Activated CD4-positive, alpha-beta T cell treated with anti-CD3 and anti-CD28 coated beads, Interleukin-2, amount 10 ng/mL, durations not matched to agents 24 days and 14 days (primary cell): ENCODE measurements at regions of chr3 and their contacts with region 1.

Region 1: DNA sequence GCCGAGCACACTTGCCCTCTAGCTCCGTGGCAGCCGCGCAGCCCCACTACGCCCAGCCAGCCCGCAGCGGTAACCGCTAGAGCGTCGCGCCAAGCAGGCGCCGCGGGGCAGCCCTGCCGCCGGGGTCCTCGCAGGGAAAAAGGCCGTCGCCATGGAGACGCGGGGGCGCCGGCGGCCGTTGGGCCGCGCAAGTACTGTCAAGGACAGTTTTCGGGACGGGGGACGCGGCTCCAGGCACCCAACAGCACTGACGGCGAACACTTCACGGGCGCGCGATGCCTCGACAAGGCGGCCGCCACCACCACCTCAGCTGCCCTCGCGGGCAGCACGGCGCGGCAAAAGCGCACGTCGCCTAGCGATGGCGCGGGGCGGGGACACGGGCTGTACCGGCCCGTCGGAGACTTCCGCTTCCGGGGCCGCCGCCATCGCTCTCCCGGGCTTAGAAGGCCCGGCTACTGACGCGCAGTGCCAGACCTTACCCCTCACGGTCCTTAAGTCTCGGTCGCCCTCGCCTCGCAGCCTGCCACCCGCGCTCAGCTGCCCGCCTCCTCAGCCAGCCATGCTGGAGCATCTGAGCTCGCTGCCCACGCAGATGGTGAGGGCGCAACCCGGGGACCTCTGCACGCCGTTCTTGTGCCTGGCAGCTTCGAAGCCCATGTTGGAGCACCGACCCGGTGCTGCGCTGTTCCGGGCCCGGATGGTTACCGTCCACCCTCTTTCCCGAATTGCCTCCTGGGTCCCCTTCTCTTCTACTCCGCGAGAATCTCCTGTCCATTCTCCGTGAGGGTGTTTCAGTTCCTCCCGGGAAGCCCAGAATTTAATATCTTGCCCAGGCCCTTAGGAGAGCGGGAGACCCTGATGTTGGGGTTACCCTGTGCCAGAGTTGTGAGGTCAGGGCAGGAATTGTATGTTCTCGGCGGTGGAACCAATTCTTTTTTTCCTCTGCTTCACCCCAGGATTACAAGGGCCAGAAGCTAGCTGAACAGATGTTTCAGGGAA is at the starts of genes GLT8D1 and SPCS1:
- DNase-seq: peak; percentile 96
- H3K4me3 Mint-ChIP-seq: peak within 1 kb of the TSS; percentile 94
- H3K27ac Mint-ChIP-seq: peak within 1 kb of the TSS; percentile 95
- H3K4me1 Mint-ChIP-seq: peaks cover 22% of the 10 kb centered on the region
- H3K27me3 Mint-ChIP-seq: no peaks in the 10 kb centered on the region
- total RNA-seq, gene GLT8D1: 38.7 and 39.0 TPM in 2 replicates
- total RNA-seq, gene SPCS1: 134 and 135 TPM in 2 replicates

Region 2: GRCh38 chr3:51670823-51671733 is 1034.9 kb before region 1 on chr3 and contains the start of gene TEX264:
- intact Hi-C with region 1: no loop called
- DNase-seq: peak; percentile 99
- H3K4me3 Mint-ChIP-seq: peak within 1 kb of the TSS; percentile 93
- H3K27ac Mint-ChIP-seq: peak within 1 kb of the TSS; percentile 93
- H3K4me1 Mint-ChIP-seq: peaks cover 61% of the 10 kb centered on the region
- H3K27me3 Mint-ChIP-seq: no peaks in the 10 kb centered on the region
- total RNA-seq, gene TEX264: 45.6 and 47.0 TPM in 2 replicates

Region 3: DNA sequence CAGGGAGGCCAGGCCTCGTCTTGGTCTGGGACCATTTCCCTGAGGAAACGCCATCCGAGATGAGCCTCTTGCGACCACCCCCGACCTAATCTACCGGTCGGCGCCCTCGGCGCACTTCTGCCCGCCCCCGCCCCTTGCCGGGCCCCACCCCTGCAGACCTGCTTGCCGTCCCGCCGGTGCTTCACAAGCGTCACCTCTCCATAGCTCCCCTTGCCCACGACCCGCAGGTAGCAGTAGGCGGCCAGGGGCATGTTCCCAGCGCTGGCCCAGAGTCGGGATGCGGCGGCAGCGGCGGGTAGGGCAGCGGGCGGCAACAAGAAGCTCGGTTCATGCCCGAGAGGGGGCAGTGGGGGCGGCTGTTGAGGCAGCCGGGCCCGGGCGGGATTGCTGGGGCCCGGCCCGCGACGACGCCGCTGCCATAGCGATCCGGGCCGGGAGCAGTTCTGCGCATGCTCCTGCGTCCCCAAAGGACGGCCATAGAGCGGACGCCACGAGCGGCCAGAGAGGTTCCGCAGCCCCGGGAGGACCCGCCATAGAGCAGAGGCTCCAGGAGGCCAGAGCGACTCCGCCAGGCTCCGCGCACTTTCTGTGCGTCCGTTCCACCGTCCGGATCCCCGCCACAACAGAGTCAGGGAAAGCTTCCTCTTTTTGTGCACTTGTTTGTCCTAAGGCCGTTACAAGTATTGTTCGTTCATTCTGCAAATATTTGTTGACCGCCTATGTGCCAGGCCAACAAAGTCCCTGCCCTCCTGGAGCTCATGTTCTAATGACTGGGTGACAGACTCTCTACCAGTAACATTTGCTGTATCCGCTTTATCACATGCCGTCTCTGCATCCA is 64.7 kb after region 1 on chr3 and contains the start of gene NEK4:
- intact Hi-C with region 1: loop called (anchors 2 kb)
- DNase-seq: peak; percentile 95
- H3K4me3 Mint-ChIP-seq: peak within 1 kb of the TSS; percentile 88
- H3K27ac Mint-ChIP-seq: peak within 1 kb of the TSS; percentile 94
- H3K4me1 Mint-ChIP-seq: peaks cover 19% of the 10 kb centered on the region
- H3K27me3 Mint-ChIP-seq: no peaks in the 10 kb centered on the region
- total RNA-seq, gene NEK4: 29.4 and 30.3 TPM in 2 replicates

Region 4: GRCh38 chr3:52798978-52799476 is 93.0 kb after region 1 on chr3:
- intact Hi-C with region 1: no loop called
- DNase-seq: peak; percentile 75
- H3K4me3 Mint-ChIP-seq: no peak overlapping the region
- H3K27ac Mint-ChIP-seq: no peak overlapping the region
- H3K4me1 Mint-ChIP-seq: peaks cover 3% of the 10 kb centered on the region
- H3K27me3 Mint-ChIP-seq: no peaks in the 10 kb centered on the region